Tibial artery (tissue), 4 donors: ENCODE measurements at regions of chr3 and their contacts with region 1.

Region 1: GRCh38 chr3:13895155-13896105 is 15.6 kb upstream of the WNT7A start:
- DNase-seq: peak; percentile 93 to 97
- H3K4me3 ChIP-seq: peak overlapping the region; percentile 63 to 75
- H3K27ac ChIP-seq: peak overlapping the region; percentile 75 to 81
- H3K4me1 ChIP-seq: peaks cover 0 to 19% (median 12%) of the 10 kb centered on the region in 4 donors
- H3K27me3 ChIP-seq: no peaks in the 10 kb centered on the region
- CTCF ChIP-seq: no peak

Region 2: DNA sequence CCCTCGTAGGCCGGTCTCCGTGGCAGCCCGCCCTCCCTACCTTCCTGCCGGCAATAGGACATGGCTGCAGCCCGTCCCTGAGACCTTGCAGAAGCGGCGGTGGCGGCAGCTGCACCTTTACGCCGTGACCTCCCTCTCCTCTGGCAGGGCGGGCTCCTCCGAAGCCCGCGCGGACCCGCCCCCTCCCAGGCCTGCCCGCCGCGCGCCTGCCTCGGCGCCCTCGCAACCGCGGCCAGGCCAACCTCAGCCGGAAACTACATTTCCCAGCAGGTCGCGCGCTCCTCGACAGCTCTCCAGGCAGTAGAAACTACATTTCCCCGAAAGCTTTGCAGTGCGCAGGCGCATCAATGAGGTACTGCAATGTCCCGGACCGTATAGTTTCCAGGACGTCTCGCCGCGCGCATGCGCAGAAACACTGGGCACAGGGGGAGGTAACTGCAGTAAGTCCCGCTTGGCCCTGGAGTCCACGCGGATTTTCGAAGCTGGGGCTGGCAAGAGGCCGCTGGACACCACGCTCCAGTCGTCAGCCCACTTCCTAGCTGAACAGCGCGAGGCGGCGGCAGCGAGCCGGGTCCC is 229.3 kb after region 1 on chr3 and contains the starts of genes CHCHD4 and TMEM43:
- intact Hi-C with region 1: loop called (anchors 5 kb)
- DNase-seq: peak; percentile 99 to 100
- H3K4me3 ChIP-seq: peak within 1 kb of the TSS; percentile 72 to 83
- H3K27ac ChIP-seq: peak within 1 kb of the TSS; percentile 93 to 94
- H3K4me1 ChIP-seq: peaks cover 0 to 41% (median 31%) of the 10 kb centered on the region in 4 donors
- H3K27me3 ChIP-seq: no peaks in the 10 kb centered on the region
- CTCF ChIP-seq: peak in 1 of 2 experiments; percentile 8

Region 3: GRCh38 chr3:14178247-14179113 is 283.1 kb after region 1 on chr3 and contains the starts of genes LSM3 and XPC:
- intact Hi-C with region 1: loop called (anchors 5 kb)
- DNase-seq: peak; percentile 96 to 98
- H3K4me3 ChIP-seq: peak within 1 kb of the TSS; percentile 93
- H3K27ac ChIP-seq: peak within 1 kb of the TSS; percentile 99
- H3K4me1 ChIP-seq: peaks cover 0 to 40% (median 26%) of the 10 kb centered on the region in 4 donors
- H3K27me3 ChIP-seq: no peaks in the 10 kb centered on the region
- CTCF ChIP-seq: no peak

Region 4: DNA sequence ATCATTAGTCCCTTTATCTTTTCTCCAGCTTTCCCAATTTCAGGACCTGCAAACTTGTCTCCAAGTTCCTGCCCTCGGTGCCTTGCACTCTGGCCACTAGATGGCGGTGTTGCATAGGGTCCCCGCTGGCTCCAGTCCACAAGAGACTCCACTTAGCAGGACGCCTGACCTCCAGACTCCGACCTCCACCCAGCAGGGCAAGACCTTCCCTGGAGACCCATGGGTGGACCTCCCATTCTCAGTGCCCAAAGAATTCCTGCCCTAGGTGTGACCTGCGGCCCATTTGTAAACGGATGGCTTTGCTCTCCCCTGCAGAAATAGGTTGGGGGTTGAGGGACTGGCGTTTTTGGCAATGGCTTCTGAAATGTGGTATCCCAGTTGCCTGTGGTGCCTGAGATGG is 365.8 kb after region 1 on chr3:
- intact Hi-C with region 1: loop called (anchors 5 kb)
- DNase-seq: peak; percentile 70 to 87
- H3K4me3 ChIP-seq: no peak overlapping the region
- H3K27ac ChIP-seq: no peak overlapping the region
- H3K4me1 ChIP-seq: peaks cover 0 to 3% (median 0%) of the 10 kb centered on the region in 4 donors
- H3K27me3 ChIP-seq: peaks cover 0 to 9% of the 10 kb centered on the region in 2 donors
- CTCF ChIP-seq: peak; percentile 89 to 96

Region 5: DNA sequence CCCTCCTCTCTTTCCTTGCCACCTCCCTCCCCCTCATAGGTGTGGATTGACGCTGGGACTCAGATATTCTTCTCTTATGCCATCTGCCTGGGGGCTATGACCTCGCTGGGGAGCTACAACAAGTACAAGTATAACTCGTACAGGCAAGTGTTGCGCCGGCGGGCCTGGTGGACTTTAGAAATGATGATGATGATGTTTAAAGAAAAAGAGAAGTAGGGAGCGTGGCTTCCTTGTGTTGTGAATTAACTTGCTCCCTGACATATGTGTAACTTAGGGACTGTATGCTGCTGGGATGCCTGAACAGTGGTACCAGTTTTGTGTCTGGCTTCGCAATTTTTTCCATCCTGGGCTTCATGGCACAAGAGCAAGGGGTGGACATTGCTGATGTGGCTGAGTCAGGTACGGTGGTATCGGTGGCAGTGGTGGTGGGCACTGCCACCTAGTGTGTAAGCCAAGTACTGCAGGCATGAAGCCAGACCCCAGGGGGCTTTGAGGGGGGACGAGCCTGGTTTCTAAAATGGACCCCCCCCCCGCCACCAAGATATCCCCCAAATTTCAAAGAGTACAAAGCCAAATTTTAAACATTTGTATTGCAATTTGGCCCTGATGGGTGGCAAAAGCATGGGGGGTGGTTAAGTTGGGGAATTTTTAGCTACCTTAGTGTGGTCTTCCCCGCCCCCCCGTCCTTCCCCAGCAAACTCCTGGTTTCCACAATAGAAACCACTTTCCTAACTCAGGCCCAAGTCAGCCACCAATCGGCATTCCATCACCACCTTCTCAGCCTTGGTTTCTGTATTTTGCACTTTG is 572.6 kb after region 1 on chr3:
- intact Hi-C with region 1: loop called (anchors 5 kb)
- DNase-seq: no peak
- H3K4me3 ChIP-seq: no peak overlapping the region
- H3K27ac ChIP-seq: no peak overlapping the region
- H3K4me1 ChIP-seq: peaks cover 0 to 7% (median 0%) of the 10 kb centered on the region in 4 donors
- H3K27me3 ChIP-seq: no peaks in the 10 kb centered on the region
- CTCF ChIP-seq: peak; percentile 93 to 97

Region 6: GRCh38 chr3:14640157-14640562 is 744.7 kb after region 1 on chr3:
- intact Hi-C with region 1: loop called (anchors 10 kb)
- DNase-seq: no peak
- H3K4me3 ChIP-seq: no peak overlapping the region
- H3K27ac ChIP-seq: no peak overlapping the region
- H3K4me1 ChIP-seq: no peaks in the 10 kb centered on the region
- H3K27me3 ChIP-seq: peaks cover 0 to 64% of the 10 kb centered on the region in 2 donors
- CTCF ChIP-seq: no peak